ENCODE measurements at regions of chr1 and their contacts with region 1.

Region 1: GRCh38 chr1:166838766-166839599 is at the start of gene POGK:
- DNase-seq: peak; percentile 78
- ATAC-seq: peak; percentile 98
- H3K4me3 ChIP-seq: peak within 1 kb of the TSS; percentile 60 to 81 (median 79)
- H3K27ac ChIP-seq: peak within 1 kb of the TSS; percentile 78
- H3K4me1 ChIP-seq: peaks cover 37% of the 10 kb centered on the region
- H3K27me3 ChIP-seq: peaks cover 0 to 6% of the 10 kb centered on the region in 2 experiments; a peak in 3 of 5 replicates
- CTCF ChIP-seq: peak; percentile 4; the same call in 1 of the 2 replicates
- EP300 ChIP-seq: 0 out of 4 replicates have a peak, but pooled peaks of 1 of the 2 experiments have one; percentile 7
- POLR2A ChIP-seq: peak; percentile 74 to 78
- RAD21 ChIP-seq: peak; percentile 24; the same call in 1 of the 2 replicates
- total RNA-seq, gene POGK: 16.2 and 17.6 TPM in 2 replicates

Region 2: GRCh38 chr1:166869318-166870099 is 30.5 kb after region 1 on chr1:
- CTCF ChIA-PET with region 1: no interaction called
- POLR2A ChIA-PET with region 1: interaction called, 41 read pairs
- in situ Hi-C with region 1: no loop called
- intact Hi-C with region 1: no loop called
- DNase-seq: no peak
- ATAC-seq: no peak
- H3K4me3 ChIP-seq: no peak overlapping the region
- H3K27ac ChIP-seq: peak overlapping the region; percentile 29
- H3K4me1 ChIP-seq: peaks cover 61% of the 10 kb centered on the region
- H3K27me3 ChIP-seq: no peaks in the 10 kb centered on the region
- CTCF ChIP-seq: no peak
- EP300 ChIP-seq: no peak
- POLR2A ChIP-seq: no peak
- RAD21 ChIP-seq: no peak

Region 3: DNA sequence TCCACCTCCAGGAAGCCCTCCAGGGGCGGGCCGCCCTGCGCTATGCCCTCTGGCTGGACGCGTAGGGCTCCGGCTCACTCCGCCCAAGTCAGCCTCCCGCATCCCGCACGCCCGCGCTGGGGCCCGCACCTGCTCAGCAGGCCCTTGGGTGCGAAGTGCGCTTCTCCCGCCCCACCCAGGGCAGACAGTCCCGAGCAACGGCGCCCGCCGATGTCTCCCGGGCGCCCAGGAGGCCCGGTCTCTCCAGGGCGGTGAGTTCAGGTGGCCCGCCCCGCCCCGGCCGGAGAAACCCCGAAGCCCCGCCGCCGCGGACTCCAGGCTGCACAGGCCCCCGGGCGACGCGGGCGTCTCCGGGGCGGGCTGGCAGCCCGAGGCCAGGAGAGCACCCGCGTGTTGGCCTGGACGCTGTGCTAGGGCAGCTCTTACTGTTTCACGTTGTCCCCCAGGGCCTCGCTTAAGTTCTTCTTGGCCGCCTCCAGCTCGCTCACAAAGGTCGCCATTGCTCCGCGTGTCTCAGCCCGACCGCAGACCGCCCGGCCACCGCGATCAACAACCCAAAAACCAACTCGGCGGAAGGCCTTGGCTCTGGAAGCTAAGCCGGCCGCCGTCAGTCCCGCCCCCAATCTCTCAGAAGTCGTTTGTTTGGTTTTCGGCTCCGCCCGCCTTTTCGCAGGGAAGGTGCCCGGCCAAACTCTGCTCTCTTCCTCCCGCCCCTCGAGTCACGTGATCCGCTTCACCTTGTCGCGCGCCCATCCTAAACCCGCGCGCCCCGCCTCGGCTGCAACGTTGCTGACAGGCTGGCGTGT is 37.0 kb after region 1 on chr1 and contains the start of gene TADA1:
- CTCF ChIA-PET with region 1: no interaction called
- POLR2A ChIA-PET with region 1: interaction called, 41 read pairs
- in situ Hi-C with region 1: no loop called
- intact Hi-C with region 1: loop called (anchors 1 kb)
- DNase-seq: peak; percentile 96
- ATAC-seq: peak; percentile 91
- H3K4me3 ChIP-seq: peak within 1 kb of the TSS; percentile 86 to 93 (median 92)
- H3K27ac ChIP-seq: peak within 1 kb of the TSS; percentile 99
- H3K4me1 ChIP-seq: peaks cover 58% of the 10 kb centered on the region
- H3K27me3 ChIP-seq: no peaks in the 10 kb centered on the region; a peak in 1 of 5 replicates
- CTCF ChIP-seq: peak; percentile 69
- EP300 ChIP-seq: no peak
- POLR2A ChIP-seq: peak; percentile 68 to 72
- RAD21 ChIP-seq: peak; percentile 35
- total RNA-seq, gene TADA1: 28.3 and 38.1 TPM in 2 replicates